Activated T-helper 2 cell treated with anti-CD3 and anti-CD28 coated beads, Interferon-gamma antibody, Interleukin-2, Interleukin-4, amounts not matched to agents 10 μg/mL and 5 μg/mL and 100 μg/mL, durations not matched to agents 14 hours and 24 hours and 36 hours (primary cell): ENCODE measurements at regions of chr10 and their contacts with region 1.

Region 1: DNA sequence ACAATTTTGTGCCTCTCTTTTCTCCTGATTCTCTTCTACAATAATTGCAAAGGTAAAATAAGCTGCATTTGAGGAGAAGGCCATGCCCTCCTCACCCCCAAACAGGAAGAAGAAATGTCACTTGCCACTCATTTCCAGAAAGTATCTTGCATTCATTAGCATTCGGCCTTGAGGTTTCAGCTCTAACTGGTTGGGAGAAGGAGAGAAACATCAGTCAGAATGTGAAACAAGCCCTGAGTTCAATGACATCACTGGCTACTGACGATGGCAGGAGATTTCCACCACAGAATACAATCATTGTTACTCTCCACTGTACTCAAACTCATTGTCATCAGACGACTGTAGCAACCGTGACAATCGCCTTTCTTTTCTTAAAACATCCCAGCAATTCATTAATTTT is 72.8 kb downstream of the PRKCQ start:
- DNase-seq: peak; percentile 45
- H3K4me3 Mint-ChIP-seq: peak overlapping the region; percentile 54
- H3K27ac Mint-ChIP-seq: peak overlapping the region; percentile 91
- H3K4me1 Mint-ChIP-seq: peaks cover 55% of the 10 kb centered on the region
- H3K27me3 Mint-ChIP-seq: no peaks in the 10 kb centered on the region

Region 2: DNA sequence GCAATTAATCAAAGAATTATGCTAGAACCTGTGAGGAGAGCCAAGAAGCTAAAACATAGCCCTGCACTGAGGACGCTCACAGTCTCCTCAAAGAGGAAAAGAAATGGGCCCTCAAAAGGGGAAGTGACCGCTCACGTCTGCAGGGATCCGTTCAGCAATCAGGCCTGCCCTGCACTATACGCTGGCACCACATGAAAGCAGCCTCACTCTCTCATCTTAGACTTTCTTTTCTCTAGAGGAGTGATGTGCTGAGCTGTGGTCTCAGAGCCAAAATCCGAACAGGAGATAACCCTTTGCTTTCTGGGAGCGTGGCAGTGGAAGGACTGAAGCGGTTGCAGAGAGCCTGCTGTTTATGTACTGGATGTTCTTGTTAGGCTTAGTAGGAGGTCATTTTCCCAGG is 438.9 kb before region 1 on chr10:
- intact Hi-C with region 1: loop called (anchors 10 kb)
- DNase-seq: peak; percentile 45
- H3K4me3 Mint-ChIP-seq: peak overlapping the region; percentile 85
- H3K27ac Mint-ChIP-seq: peak overlapping the region; percentile 99
- H3K4me1 Mint-ChIP-seq: peaks cover 91% of the 10 kb centered on the region
- H3K27me3 Mint-ChIP-seq: no peaks in the 10 kb centered on the region

Region 3: GRCh38 chr10:6136215-6137201 is 370.8 kb before region 1 on chr10:
- intact Hi-C with region 1: loop called (anchors 10 kb)
- DNase-seq: peak; percentile 32
- H3K4me3 Mint-ChIP-seq: peak overlapping the region; percentile 38
- H3K27ac Mint-ChIP-seq: peak overlapping the region; percentile 84
- H3K4me1 Mint-ChIP-seq: peaks cover 55% of the 10 kb centered on the region
- H3K27me3 Mint-ChIP-seq: peaks cover 11% of the 10 kb centered on the region

Region 4: GRCh38 chr10:6473901-6474370 is 33.4 kb before region 1 on chr10:
- intact Hi-C with region 1: loop called (anchors 1 kb)
- DNase-seq: no peak
- H3K4me3 Mint-ChIP-seq: peak overlapping the region; percentile 83
- H3K27ac Mint-ChIP-seq: peak overlapping the region; percentile 95
- H3K4me1 Mint-ChIP-seq: peaks cover 60% of the 10 kb centered on the region
- H3K27me3 Mint-ChIP-seq: no peaks in the 10 kb centered on the region

Region 5: DNA sequence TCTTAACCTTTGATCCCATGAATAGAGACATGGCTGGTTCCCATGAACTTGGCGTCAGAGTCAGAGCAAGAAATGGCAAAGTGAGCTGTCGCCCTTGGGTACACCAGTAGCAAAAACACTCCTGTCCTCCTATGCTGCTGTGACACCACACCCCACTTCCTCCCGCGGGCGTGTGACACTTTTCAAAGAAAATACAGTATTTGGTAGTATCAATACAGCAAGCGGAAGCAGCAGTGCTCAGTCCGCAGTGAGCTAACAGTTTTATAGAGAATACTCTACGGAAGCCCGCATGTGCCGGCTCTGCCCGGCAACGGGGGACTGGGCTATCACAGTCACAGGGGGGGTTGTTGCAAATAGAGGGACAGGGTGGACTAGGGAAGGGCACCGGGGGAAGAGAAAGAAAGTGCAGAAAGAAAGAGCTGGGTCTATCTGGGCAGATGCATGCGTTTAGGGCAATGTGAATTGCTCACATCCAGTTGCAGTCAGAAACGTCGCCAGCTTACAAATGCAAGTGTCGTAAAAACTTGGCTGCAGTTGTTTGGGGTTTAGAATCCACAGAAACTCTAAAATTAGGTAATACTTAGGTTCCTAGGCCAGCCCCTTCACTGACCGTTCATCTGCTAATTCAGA is 23.0 kb after region 1 on chr10:
- intact Hi-C with region 1: loop called (anchors 2 kb)
- DNase-seq: peak; percentile 76
- H3K4me3 Mint-ChIP-seq: peak overlapping the region; percentile 80
- H3K27ac Mint-ChIP-seq: peak overlapping the region; percentile 97
- H3K4me1 Mint-ChIP-seq: peaks cover 71% of the 10 kb centered on the region
- H3K27me3 Mint-ChIP-seq: no peaks in the 10 kb centered on the region

Region 6: DNA sequence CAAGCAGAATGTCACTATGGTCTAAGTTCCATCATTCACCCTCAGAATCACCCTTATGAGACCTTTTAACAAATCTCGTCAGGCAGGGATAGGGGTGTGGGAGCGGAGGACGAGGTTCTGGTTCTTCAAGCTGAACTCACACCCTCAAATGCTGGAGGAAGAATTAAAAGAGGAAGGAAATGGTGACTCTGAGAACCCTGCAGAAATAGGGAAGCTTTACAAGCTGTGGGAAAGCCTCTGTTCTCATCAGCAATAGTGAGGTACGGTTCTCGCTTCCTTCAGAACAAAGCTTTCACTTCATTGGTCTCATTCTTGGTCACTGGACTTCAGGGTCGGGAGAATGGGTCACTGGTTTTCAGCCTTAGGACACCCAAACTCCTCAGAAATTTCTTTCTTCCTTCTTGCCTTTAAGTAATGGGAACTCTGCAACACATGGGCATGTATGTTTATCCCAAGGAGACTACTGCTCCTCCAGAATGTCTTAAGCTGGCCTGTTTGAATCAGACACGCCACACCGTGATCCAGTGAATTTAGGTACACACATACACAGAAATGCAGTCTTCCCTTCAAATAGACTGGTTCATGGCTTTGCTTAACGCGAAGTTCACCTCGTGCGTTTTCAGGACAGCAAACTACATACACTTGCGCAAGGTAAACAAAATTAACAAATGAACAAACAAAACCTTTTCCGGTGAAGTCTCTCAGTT is 677.5 kb after region 1 on chr10:
- intact Hi-C with region 1: loop called (anchors 10 kb)
- DNase-seq: no peak
- H3K4me3 Mint-ChIP-seq: peak overlapping the region; percentile 47
- H3K27ac Mint-ChIP-seq: peak overlapping the region; percentile 87
- H3K4me1 Mint-ChIP-seq: peaks cover 58% of the 10 kb centered on the region
- H3K27me3 Mint-ChIP-seq: no peaks in the 10 kb centered on the region